Activated CD4-positive, alpha-beta T cell treated with anti-CD3 and anti-CD28 coated beads for 36 hours (primary cell): ENCODE measurements at regions of chr10 and their contacts with region 1.

Region 1: DNA sequence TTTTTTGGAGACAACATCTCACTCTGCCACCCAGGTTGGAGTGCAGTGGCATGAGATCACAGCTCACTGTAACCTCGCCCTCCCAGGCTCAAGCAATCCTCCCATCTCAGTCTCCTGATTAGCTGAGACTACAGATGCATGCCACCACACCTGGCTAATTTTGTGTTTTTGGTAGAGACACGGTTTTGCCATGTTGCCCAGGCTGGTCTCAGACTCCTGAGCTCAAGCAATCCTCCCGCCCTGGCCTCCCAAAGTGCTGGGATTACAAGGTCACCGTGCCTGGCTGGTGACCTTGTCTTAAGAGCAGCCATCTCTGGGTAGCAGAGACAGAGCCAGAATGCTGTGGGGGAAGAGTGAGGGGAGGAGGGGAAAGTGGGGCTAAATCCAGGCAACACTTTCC is 25.8 kb upstream of the ASCC1 start:
- DNase-seq: no peak
- ATAC-seq: no peak
- H3K4me3 Mint-ChIP-seq: no peak overlapping the region
- H3K27ac Mint-ChIP-seq: peak overlapping the region; percentile 76
- H3K4me1 Mint-ChIP-seq: peaks cover 60% of the 10 kb centered on the region
- H3K27me3 Mint-ChIP-seq: no peaks in the 10 kb centered on the region

Region 2: DNA sequence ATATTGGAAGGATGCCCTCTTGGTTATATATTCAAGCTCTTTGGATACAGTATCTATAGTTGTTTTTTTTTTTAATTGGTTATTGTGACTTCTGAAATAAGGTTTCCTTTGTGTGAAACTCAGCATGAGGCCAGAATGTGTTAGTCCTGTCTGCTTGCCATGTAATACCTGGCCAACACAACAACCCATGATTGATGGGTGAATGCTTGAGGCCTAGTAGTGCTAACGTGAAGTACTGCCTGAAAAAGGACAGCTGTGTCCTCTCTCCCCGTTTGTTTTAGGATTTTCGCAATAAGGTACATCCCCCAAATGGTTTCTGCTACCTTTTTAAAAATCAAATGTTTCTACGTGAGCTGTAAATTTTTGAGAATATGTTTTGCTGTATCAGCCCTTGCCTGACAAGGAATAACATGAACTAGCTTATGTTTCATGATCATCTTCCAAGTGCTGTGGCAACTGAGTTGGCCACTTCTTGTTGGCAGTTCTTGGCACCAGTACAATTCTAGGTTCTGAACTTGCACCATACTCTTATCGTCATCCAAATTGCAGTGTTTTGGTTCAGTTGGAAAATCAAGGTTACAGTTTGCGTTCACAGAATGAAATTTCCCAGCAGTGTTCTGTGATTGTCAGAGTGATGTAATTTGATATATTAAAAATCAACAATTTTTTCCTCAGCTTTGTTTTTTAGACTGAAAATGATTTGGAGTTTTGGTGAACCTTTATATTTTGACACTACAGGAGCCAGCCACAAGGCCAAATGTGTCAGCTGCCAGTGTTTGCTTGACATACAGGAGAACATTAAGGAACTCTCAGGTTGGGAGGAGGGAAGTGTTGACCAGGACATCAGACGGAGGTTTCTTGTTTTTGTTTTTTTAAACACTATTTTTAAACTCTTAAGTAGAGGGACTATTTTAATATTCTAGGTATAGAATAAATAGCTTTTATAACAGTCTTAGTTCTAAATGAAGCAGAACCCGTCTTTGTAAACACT is 12.3 kb before region 1 on chr10:
- CTCF ChIA-PET with region 1: interaction called, 4 read pairs
- POLR2A ChIA-PET with region 1: interaction called, 14 read pairs
- intact Hi-C with region 1: loop called in 1 of 2 experiments (anchors 1 kb)
- DNase-seq: no peak
- ATAC-seq: no peak
- H3K4me3 Mint-ChIP-seq: no peak overlapping the region
- H3K27ac Mint-ChIP-seq: peak overlapping the region; percentile 75
- H3K4me1 Mint-ChIP-seq: peaks cover 38% of the 10 kb centered on the region
- H3K27me3 Mint-ChIP-seq: no peaks in the 10 kb centered on the region

Region 3: DNA sequence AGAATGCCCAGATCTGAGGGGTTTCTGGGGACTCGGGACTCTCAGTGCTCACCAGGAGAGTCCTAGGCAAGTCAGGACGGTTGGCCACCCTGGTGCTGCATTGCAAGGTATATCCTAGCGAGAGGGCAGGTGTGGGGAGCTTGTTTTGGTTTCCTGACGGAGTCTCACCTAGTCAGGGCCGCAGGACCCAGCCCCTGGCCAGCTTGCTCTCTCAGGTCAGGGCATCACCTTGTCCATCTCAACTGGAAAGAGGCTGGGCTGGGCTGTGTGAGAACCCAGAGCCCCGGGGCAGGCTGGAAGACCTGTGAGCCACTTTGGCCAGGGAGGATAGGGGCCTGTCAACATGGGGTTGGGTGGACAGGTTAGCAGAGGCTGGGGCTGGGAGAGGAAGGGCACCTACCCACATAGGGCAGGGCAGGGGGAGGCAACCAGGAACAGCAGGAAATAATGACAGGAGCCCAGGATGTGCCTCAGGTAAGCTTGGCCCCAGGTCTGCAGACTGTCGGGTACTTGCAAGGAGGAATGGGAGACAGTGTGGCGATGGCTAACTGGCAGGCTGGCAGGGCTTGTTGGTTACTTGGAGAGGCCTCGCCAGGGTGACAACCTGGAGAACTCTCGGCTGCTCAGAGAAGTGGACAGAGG is 81.4 kb after region 1 on chr10:
- CTCF ChIA-PET with region 1: no interaction called
- POLR2A ChIA-PET with region 1: no interaction called
- intact Hi-C with region 1: no loop called
- DNase-seq: no peak
- ATAC-seq: no peak
- H3K4me3 Mint-ChIP-seq: peak overlapping the region; percentile 84
- H3K27ac Mint-ChIP-seq: peak overlapping the region; percentile 100
- H3K4me1 Mint-ChIP-seq: peaks cover 66% of the 10 kb centered on the region
- H3K27me3 Mint-ChIP-seq: no peaks in the 10 kb centered on the region